Body of pancreas (tissue), 4 donors: ENCODE measurements at regions of chr18 and their contacts with region 1.

Region 1: DNA sequence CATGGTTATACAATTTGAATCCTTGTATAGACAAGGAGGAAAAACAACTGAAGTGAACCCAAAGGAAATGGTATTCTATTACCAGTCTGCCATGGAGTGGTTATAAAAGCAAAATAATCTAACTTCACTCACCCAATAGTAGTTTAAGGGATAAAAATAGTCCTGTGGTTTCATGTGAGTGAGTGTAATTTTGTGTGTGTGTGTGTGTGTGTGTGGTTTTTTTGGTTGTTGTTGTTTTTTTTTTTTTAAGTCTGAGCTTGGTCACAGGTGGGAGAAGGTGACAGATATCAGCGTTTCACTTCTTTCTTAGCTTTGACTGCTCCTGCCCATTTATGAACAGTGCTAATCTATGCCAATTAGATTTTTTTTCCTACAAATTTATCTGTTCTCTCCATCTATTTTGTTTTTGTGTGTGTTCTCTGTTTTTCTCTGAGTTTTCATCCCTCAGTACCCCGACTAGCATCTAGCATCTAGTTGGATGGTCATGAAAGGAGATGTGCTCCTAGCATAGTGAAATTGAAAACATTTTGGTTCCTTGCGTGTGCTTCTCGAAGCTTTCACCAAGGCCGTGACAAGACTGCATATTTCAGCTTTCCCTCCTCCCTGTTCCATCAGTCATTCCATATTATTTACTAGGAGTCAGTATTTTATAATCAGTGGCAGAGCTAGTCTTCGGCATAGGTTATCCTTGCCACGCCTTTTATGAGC is 200.1 kb upstream of the DTNA start:
- DNase-seq: no peak
- ATAC-seq: no peak
- H3K4me3 ChIP-seq: no peak overlapping the region
- H3K27ac ChIP-seq: no peak overlapping the region
- H3K4me1 ChIP-seq: peaks cover 19% of the 10 kb centered on the region
- H3K27me3 ChIP-seq: no peaks in the 10 kb centered on the region
- CTCF ChIP-seq: no peak
- POLR2A ChIP-seq: no peak

Region 2: GRCh38 chr18:34659579-34660517 is 149.8 kb after region 1 on chr18:
- intact Hi-C with region 1: loop called (anchors 10 kb)
- DNase-seq: peak; percentile 87 to 93 (median 90)
- ATAC-seq: peak; percentile 99
- H3K4me3 ChIP-seq: no peak overlapping the region
- H3K27ac ChIP-seq: peak overlapping the region in 3 of 4 donors; percentile 35 to 70 (median 56)
- H3K4me1 ChIP-seq: peaks cover 24% of the 10 kb centered on the region
- H3K27me3 ChIP-seq: no peaks in the 10 kb centered on the region
- CTCF ChIP-seq: no peak
- POLR2A ChIP-seq: no peak